MCF 10A (cell line): ENCODE measurements at regions of chr18 and their contacts with region 1.

Region 1: GRCh38 chr18:22838639-22839277 is 94.4 kb upstream of the RBBP8 start:
- DNase-seq: no peak
- H3K4me3 Mint-ChIP-seq: no peak overlapping the region
- H3K27ac Mint-ChIP-seq: no peak overlapping the region
- H3K4me1 Mint-ChIP-seq: peaks cover 27% of the 10 kb centered on the region
- H3K27me3 Mint-ChIP-seq: no peaks in the 10 kb centered on the region
- CTCF ChIP-seq: no peak

Region 2: DNA sequence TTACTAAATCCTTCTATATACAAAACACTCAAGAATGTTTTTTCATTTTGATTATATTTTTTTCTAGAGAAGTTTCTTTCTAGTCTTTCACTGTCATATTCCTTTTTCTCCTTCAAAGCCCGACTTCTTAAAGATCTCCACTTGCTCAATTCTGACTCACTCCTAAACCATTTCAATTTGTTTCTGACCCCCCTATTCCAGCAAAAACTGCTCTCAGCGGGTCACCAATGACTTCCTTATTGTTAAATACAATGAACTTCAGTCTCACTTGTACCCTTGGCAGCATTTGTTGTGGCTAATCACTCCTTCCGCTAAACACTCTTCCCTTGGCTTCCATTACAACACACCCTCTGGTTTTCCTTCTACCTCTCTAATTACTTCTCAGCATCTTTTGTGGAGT is 16.7 kb before region 1 on chr18:
- CTCF ChIA-PET with region 1: interaction called, 6 read pairs
- POLR2A ChIA-PET with region 1: interaction called, 54 read pairs
- intact Hi-C with region 1: no loop called
- DNase-seq: peak; percentile 89
- H3K4me3 Mint-ChIP-seq: no peak overlapping the region
- H3K27ac Mint-ChIP-seq: no peak overlapping the region
- H3K4me1 Mint-ChIP-seq: peaks cover 20% of the 10 kb centered on the region
- H3K27me3 Mint-ChIP-seq: no peaks in the 10 kb centered on the region
- CTCF ChIP-seq: no peak